ENCODE measurements at regions of chr15 and their contacts with region 1.

Region 1: DNA sequence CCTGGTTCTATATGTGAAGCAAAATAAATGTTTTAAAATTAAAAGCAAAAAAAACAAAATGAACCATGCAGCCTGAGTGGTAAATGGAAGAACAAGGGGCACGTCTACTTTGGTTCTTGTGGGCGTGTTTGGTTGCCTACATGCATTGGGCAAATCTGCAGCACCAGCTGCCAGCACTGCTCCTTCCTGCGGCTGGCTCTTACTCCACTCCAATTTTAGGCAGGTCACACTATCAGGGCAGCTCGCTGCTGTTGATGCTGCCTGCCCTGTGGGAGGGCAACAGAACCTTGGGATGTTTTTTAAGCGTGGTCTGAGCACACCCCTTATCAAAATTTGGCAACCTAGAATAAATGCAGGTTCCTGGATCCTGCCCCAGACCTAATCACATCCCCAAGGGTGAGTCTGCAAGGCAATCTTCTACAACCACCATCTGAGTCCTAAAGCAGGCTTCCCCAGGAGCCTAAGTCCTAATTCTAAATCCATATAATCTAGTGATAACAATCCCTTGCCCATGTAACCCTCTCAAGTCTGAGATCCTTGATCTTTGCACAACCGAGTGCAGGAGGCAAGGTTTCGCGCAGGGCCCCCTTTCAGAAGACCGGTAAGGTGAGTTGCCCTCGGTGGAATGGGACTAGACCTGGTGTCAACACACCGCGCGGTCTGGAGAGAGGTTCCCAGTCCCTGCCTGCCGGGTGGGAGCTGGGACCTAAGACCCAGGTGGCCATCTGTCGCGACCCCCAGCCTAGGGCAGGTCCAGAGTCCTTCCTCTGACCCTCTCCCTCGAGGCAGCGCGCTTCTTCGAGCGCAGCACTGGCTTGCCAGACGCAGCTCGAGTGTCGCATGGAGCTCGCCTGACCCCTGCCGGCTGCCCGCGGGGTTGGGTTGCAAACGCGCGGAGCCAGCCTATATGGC is 15.9 kb downstream of the IVD start:
- DNase-seq: peak; percentile 81
- H3K4me3 Mint-ChIP-seq: no peak overlapping the region
- H3K27ac Mint-ChIP-seq: no peak overlapping the region
- H3K4me1 Mint-ChIP-seq: peaks cover 2% of the 10 kb centered on the region
- H3K27me3 Mint-ChIP-seq: no peaks in the 10 kb centered on the region

Region 2: DNA sequence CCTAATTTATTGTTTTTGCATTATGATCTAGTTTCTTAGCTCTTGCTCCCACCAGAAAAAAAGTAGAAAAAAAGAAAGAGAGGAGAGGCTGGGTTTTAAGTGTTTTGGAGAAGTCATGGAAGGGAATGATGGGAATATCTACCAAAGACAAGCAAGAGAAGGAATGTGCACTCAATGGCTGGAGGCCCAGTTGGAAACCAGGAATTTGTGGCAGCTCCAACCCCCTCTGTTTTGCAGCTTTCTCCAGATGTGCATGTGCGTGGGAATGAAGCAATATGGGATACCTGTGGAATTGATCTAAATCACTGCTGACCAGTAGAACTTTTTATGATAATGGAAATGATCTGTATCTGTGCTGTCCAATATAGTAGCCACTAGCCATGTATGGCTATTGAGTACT is 460.5 kb before region 1 on chr15:
- CTCF ChIA-PET with region 1: no interaction called
- POLR2A ChIA-PET with region 1: no interaction called
- DNase-seq: no peak
- H3K4me3 Mint-ChIP-seq: no peak overlapping the region
- H3K27ac Mint-ChIP-seq: no peak overlapping the region
- H3K4me1 Mint-ChIP-seq: peaks cover 13% of the 10 kb centered on the region
- H3K27me3 Mint-ChIP-seq: no peaks in the 10 kb centered on the region

Region 3: DNA sequence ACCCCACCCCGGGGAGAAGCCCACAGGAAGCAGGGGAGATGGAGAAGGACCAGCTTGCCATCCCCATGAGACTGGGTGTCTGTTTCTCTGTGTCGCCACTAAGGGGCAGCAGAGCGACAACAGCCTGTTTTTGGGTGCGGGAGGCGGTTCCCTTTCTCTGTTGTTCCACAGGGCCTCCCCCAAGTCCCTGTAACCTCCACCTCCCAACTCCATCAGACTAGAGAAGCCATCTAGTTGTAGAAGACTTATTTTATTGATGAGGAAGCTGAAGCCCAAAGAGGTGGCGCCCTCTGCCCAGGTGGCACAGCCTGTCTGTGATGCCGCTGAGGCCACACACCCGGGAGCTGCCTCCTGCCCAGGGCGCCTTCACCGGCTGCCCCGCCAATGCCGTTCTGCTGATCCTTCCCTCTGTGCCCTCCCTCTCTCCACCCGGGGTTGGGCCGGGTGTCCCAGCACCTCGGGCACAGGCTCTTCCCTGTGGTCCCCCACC is 76.8 kb before region 1 on chr15:
- CTCF ChIA-PET with region 1: interaction called, 33 read pairs
- POLR2A ChIA-PET with region 1: no interaction called
- DNase-seq: peak; percentile 83
- H3K4me3 Mint-ChIP-seq: no peak overlapping the region
- H3K27ac Mint-ChIP-seq: no peak overlapping the region
- H3K4me1 Mint-ChIP-seq: no peaks in the 10 kb centered on the region
- H3K27me3 Mint-ChIP-seq: no peaks in the 10 kb centered on the region

Region 4: GRCh38 chr15:40357723-40358470 is 63.6 kb before region 1 on chr15 and contains the start of gene DISP2:
- CTCF ChIA-PET with region 1: interaction called, 10 read pairs
- POLR2A ChIA-PET with region 1: no interaction called
- DNase-seq: peak; percentile 88
- H3K4me3 Mint-ChIP-seq: peak within 1 kb of the TSS; percentile 75
- H3K27ac Mint-ChIP-seq: no peak within 1 kb of the TSS
- H3K4me1 Mint-ChIP-seq: peaks cover 11% of the 10 kb centered on the region
- H3K27me3 Mint-ChIP-seq: peaks cover 20% of the 10 kb centered on the region
- total RNA-seq, gene DISP2: 0.60 to 1.4 TPM